MCF 10A (cell line): ENCODE measurements at regions of chr2 and their contacts with region 1.

Region 1: GRCh38 chr2:102020596-102021181 is 28.9 kb downstream of the IL1R2 start:
- DNase-seq: peak; percentile 84
- H3K4me3 Mint-ChIP-seq: no peak overlapping the region
- H3K27ac Mint-ChIP-seq: no peak overlapping the region
- H3K4me1 Mint-ChIP-seq: peaks cover 18% of the 10 kb centered on the region
- H3K27me3 Mint-ChIP-seq: no peaks in the 10 kb centered on the region
- CTCF ChIP-seq: peak; percentile 98

Region 2: DNA sequence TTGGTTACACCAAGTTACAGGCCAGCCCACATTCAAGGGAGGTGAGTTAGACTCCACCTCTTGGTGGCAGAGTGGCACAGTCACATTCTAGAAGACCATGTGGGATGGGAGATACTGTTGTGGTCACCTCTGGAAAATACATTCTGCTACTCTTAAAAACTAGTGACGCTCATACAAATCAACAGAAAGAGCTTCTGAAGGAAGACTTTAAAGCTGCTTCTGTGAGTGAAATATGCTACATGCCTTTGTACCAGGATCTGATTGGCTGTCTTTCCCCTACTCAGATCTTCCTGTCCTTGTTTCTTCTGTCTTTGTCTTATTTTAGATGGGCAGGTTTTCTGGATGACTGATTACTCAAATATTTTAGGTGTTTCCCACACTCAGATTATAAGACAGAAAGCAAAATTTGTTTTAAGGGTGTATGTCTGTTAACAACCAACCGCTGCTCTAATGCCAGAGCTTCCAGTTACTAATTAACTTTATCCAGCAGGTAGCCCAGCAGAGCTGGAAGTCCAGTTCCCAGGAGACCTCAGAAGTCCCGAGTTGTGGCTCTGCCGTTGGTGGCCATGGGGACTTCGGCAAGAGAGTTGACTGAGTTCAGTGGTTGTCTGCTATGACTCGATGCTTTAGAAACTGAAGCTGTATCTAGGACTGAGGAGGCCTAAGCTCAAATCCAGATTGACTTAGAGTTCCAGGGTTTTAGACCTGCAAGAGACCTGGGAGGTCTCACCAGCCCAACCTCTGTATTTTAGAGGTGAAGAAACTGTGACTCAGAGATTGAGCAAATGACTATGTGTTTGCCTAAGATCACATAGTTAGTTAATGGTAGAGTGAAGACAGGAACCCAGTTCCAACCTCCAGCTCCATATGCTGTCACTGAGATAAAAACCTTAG is 21.5 kb before region 1 on chr2:
- CTCF ChIA-PET with region 1: interaction called, 38 read pairs
- POLR2A ChIA-PET with region 1: no interaction called
- intact Hi-C with region 1: no loop called
- DNase-seq: peak; percentile 21
- H3K4me3 Mint-ChIP-seq: no peak overlapping the region
- H3K27ac Mint-ChIP-seq: no peak overlapping the region
- H3K4me1 Mint-ChIP-seq: no peaks in the 10 kb centered on the region
- H3K27me3 Mint-ChIP-seq: peaks cover 2% of the 10 kb centered on the region
- CTCF ChIP-seq: no peak

Region 3: GRCh38 chr2:102050854-102051391 is 30.2 kb after region 1 on chr2:
- CTCF ChIA-PET with region 1: interaction called, 9 read pairs
- POLR2A ChIA-PET with region 1: interaction called, 25 read pairs
- intact Hi-C with region 1: no loop called
- DNase-seq: peak; percentile 28
- H3K4me3 Mint-ChIP-seq: no peak overlapping the region
- H3K27ac Mint-ChIP-seq: peak overlapping the region; percentile 82
- H3K4me1 Mint-ChIP-seq: peaks cover 31% of the 10 kb centered on the region
- H3K27me3 Mint-ChIP-seq: no peaks in the 10 kb centered on the region
- CTCF ChIP-seq: no peak

Region 4: GRCh38 chr2:102141970-102142828 is 121.5 kb after region 1 on chr2 and contains the start of gene IL1R1:
- CTCF ChIA-PET with region 1: interaction called, 20 read pairs
- POLR2A ChIA-PET with region 1: interaction called, 18 read pairs
- intact Hi-C with region 1: no loop called
- DNase-seq: peak; percentile 80
- H3K4me3 Mint-ChIP-seq: peak within 1 kb of the TSS; percentile 81
- H3K27ac Mint-ChIP-seq: peak within 1 kb of the TSS; percentile 68
- H3K4me1 Mint-ChIP-seq: no peaks in the 10 kb centered on the region
- H3K27me3 Mint-ChIP-seq: no peaks in the 10 kb centered on the region
- CTCF ChIP-seq: no peak
- total RNA-seq, gene IL1R1: 5.2 and 6.0 TPM in 2 replicates

Region 5: DNA sequence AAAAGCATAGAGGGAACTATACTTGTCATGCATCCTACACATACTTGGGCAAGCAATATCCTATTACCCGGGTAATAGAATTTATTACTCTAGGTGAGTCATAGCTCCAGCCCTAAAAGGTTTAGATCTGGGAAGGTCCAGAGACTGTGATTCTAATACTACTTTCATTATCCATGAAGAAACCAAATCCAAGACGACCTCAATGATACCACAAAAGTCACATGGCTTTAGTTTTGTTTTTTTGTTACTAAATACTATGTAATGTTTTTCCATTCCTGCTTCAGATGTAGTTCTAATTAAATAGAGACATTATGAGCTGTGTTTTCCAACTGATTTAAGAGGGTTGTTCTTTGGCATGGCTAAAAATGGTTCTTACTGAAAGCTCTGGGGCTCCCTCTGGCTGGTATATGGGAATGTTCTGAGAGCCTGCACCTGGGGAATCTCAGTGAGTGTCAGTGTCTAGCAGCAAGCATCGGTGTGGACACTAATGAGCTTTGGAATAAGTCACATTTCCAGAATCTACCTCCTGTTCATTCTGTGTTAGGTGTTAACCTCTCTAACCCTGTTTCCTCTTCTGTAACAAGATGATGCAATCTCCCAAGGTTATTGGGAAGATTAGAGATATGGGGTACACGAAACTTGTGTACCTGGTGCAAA is 145.6 kb after region 1 on chr2:
- CTCF ChIA-PET with region 1: interaction called, 96 read pairs
- POLR2A ChIA-PET with region 1: interaction called, 25 read pairs
- intact Hi-C with region 1: loop called (anchors 1 kb)
- DNase-seq: peak; percentile 68
- H3K4me3 Mint-ChIP-seq: no peak overlapping the region
- H3K27ac Mint-ChIP-seq: no peak overlapping the region
- H3K4me1 Mint-ChIP-seq: peaks cover 9% of the 10 kb centered on the region
- H3K27me3 Mint-ChIP-seq: no peaks in the 10 kb centered on the region
- CTCF ChIP-seq: peak; percentile 56

Region 6: DNA sequence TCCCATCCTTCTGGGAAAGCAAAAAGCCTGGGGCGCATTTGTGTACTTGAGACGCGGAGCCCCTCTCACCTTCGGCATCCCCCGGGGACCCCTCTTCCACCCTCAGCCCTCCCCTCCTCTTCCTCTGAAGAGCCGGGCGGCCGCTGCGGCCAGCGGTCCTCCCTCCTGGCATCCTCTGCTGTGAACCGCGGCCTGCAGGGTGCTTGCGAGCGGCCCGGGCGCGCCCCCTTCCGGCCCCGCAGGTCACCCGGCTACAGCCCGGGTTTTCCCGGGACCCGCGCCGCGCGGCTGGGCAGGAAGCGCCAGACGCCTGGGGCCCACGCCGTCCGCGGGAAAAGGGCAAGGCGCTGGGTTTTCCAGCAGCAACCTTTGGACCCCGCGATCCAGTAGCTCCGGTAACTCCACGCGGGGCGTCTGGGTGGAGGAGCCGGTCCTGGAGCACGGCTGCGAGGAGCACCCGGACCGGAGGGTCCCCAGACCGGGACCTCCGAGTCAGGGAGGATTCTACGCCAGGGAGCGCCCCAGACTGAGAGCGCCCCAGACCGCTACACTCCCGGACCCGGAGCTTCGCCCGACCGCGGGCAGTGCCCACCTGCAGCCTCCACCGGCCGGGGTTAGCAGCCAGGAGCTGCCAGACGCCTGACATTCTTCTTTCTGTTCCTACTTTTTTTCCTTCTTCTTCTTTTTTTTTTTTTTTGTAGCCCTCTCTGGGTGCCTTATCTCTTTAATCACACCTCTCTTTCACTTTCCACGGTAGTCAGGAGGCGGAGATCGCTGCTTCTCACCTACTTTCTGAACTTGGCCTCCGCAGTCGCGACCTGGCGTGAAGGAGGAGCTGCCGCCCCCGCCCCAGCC is 335.1 kb after region 1 on chr2 and contains the start of gene IL18R1:
- CTCF ChIA-PET with region 1: interaction called, 7 read pairs
- POLR2A ChIA-PET with region 1: no interaction called
- intact Hi-C with region 1: loop called (anchors 1 kb)
- DNase-seq: peak; percentile 71
- H3K4me3 Mint-ChIP-seq: peak within 1 kb of the TSS; percentile 87
- H3K27ac Mint-ChIP-seq: peak within 1 kb of the TSS; percentile 68
- H3K4me1 Mint-ChIP-seq: peaks cover 19% of the 10 kb centered on the region
- H3K27me3 Mint-ChIP-seq: no peaks in the 10 kb centered on the region
- CTCF ChIP-seq: peak; percentile 85
- total RNA-seq, gene IL18R1: 3.5 and 6.7 TPM in 2 replicates